GM10248 (cell line): ENCODE measurements at regions of chr7 and their contacts with region 1.

Region 1: GRCh38 chr7:50768485-50769484 is 13.9 kb downstream of the GRB10 start:
- DNase-seq: no peak
- CTCF ChIP-seq: no peak

Region 2: GRCh38 chr7:50751146-50751545 is 17.6 kb before region 1 on chr7:
- CTCF ChIA-PET with region 1: interaction called, 10 read pairs
- POLR2A ChIA-PET with region 1: no interaction called
- DNase-seq: no peak
- CTCF ChIP-seq: no peak

Region 3: GRCh38 chr7:50793115-50793946 is 24.5 kb after region 1 on chr7:
- CTCF ChIA-PET with region 1: no interaction called
- POLR2A ChIA-PET with region 1: no interaction called
- DNase-seq: no peak
- CTCF ChIP-seq: no peak